ENCODE measurements at regions of chr10 and their contacts with region 1.

Region 1: DNA sequence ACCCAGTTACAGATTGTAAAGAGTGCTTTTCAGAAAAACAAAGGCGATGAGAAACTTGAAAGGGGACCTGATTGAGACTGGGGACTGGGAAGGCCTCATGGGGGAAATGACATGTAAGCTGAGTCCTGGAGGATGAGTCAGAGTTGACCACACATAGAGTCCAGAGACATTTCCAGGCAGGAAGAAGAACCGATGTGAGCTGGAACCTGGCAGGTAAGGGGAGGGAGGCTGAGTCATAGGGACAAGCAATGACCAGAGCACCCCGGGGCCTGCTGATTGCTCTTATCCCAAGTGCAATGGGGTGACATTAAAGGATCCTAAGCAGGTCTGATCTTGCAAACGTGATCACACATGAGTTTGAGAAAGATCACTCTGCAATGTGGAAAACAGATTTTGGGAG is 11.7 kb downstream of the TLL2 start:
- DNase-seq: no peak
- H3K4me3 ChIP-seq: no peak overlapping the region
- H3K27me3 ChIP-seq: no peaks in the 10 kb centered on the region; the same call in 1 of the 2 replicates
- CTCF ChIP-seq: no peak

Region 2: DNA sequence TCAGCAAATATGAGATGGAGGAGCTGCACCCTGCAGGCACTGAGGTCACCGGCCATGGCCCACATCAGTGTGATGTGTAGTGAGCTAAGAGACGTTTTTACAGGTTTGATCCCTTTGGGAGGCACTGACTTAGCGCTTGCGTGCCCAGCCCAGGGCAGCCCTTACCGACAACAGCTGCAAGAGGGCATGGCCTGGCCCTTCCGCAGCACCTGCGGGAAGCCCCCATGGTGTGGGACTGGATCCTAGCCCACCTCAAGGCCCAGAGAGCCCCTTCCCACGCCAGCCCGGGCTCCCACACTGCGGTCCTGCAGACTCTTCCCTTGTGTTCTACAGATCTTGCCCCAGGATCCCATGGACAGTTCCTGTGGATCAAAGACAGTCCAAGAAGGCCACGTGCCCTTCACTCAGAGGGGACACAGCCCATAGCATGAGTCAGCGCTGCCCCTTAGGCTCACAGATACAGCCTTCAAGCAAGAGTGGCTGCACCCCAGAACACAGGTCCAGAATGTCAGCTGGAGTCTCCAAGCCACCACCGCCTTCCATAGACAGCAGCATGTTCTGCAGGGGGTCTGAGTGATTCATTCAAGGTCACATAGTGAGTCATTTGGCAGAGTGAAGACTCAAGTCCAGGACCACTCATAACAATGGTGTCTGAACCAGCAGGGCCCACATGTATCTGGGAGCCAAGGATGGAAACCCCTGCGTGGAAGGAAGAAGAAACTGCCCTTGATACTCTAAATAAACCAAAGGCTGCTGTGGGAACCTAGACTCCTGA is 13.6 kb before region 1 on chr10:
- CTCF ChIA-PET with region 1: no interaction called
- POLR2A ChIA-PET with region 1: no interaction called
- DNase-seq: no peak
- H3K4me3 ChIP-seq: no peak overlapping the region
- H3K27me3 ChIP-seq: no peaks in the 10 kb centered on the region
- CTCF ChIP-seq: no peak

Region 3: DNA sequence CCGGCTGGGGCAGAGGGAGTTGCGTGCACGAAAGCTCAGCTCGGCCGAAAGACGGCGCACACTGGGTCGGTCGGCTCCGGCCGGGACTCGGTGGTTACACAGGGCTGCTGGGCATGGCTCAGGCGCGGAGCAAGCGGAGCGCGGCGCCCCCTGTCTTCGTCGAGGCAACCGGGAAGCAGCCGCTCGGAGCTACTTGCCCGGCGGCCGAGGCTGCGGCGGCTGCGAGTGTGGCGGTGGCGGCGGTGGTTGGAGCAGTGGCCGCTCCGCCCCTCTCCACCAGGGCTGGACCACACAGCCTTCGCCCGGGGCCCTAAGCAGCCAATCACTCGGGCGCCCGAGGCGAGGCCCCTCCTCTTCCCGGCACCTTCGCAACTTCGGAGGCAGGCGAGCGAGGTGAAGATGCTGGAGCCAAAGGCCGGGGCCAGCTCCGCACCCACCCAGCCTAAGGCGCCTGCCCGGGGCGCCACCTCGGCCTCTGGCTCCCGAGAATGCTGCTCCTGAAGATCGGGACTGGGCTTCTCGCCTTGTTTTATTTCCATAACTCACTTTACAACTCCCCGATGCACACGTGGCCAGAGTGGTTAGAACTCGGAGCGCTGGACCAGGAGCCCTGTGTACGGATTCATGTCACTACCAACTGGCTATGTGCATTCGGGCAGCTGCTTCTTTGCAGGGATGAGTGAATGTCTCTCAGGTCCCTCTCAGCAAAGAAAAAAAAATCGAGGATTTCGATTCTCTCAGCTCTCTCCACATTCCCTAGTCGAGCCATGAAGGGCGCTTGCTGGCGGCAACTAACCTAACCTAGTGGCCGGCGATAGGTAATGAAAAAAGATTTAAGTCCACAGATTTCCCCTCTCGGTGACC is 11.9 kb after region 1 on chr10 and contains the start of gene TLL2:
- CTCF ChIA-PET with region 1: interaction called, 13 read pairs
- POLR2A ChIA-PET with region 1: no interaction called
- DNase-seq: peak; percentile 47
- H3K4me3 ChIP-seq: peak within 1 kb of the TSS; percentile 46
- H3K27me3 ChIP-seq: peaks cover 4% of the 10 kb centered on the region; the same call in 1 of the 2 replicates
- CTCF ChIP-seq: peak; percentile 67
- polyA plus RNA-seq, gene TLL2: 0.05 and 0.06 TPM in 2 replicates

Region 4: DNA sequence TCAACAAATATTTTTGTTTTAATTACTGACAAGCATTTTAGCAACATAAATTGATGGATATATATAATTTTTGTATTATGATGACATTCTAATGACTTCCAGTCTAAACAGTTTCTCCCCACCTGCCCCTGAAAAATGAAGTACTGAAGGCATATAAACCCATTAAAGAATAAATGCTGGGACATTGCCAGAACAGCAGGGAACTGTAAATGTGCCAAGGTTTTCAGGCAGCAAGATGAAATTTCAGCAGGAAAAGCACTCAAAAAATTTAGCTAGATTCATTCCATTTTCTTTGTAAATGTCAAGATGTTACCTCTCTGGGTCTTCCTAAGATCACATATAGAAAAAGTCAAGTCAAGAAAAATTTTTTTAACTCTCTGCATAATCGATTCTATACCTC is 22.8 kb after region 1 on chr10:
- CTCF ChIA-PET with region 1: no interaction called
- POLR2A ChIA-PET with region 1: no interaction called
- DNase-seq: no peak
- H3K4me3 ChIP-seq: no peak overlapping the region
- H3K27me3 ChIP-seq: no peaks in the 10 kb centered on the region
- CTCF ChIP-seq: no peak